PC-3 (cell line): ENCODE measurements at regions of chr3 and their contacts with region 1.

Region 1: GRCh38 chr3:20511863-20512505 is 326.0 kb upstream of the SGO1 start:
- DNase-seq: peak; percentile 76
- ATAC-seq: peak; percentile 98
- H3K4me3 ChIP-seq: no peak overlapping the region
- H3K27ac ChIP-seq: no peak overlapping the region
- H3K4me1 ChIP-seq: no peaks in the 10 kb centered on the region
- H3K27me3 ChIP-seq: no peaks in the 10 kb centered on the region
- CTCF ChIP-seq: peak; percentile 87

Region 2: GRCh38 chr3:20442846-20443245 is 69.1 kb before region 1 on chr3:
- CTCF ChIA-PET with region 1: no interaction called
- POLR2A ChIA-PET with region 1: no interaction called
- intact Hi-C with region 1: no loop called
- DNase-seq: no peak
- ATAC-seq: no peak
- H3K4me3 ChIP-seq: no peak overlapping the region
- H3K27ac ChIP-seq: no peak overlapping the region
- H3K4me1 ChIP-seq: no peaks in the 10 kb centered on the region
- H3K27me3 ChIP-seq: no peaks in the 10 kb centered on the region
- CTCF ChIP-seq: no peak

Region 3: DNA sequence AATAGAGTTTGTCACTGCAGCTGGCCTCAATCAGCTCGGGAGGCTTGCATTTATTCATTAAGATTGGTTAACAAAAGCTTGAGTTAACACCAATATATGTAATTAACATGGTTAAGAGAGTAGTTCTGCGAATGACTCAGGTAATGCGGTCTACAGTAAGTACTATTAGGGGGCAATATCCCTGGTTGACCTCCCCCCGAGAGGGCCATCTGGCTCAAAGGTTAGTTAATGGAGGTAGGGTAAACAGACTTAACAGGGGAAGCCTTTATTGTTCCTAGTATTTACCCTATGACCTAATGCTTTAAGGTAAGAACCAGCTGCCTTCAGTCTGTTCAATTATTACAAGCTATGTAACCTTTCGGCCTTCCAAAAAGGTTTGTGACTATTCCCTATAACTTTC is 77.3 kb after region 1 on chr3:
- CTCF ChIA-PET with region 1: no interaction called
- POLR2A ChIA-PET with region 1: no interaction called
- intact Hi-C with region 1: no loop called
- DNase-seq: no peak
- ATAC-seq: no peak
- H3K4me3 ChIP-seq: no peak overlapping the region
- H3K27ac ChIP-seq: no peak overlapping the region
- H3K4me1 ChIP-seq: no peaks in the 10 kb centered on the region
- H3K27me3 ChIP-seq: no peaks in the 10 kb centered on the region
- CTCF ChIP-seq: no peak

Region 4: DNA sequence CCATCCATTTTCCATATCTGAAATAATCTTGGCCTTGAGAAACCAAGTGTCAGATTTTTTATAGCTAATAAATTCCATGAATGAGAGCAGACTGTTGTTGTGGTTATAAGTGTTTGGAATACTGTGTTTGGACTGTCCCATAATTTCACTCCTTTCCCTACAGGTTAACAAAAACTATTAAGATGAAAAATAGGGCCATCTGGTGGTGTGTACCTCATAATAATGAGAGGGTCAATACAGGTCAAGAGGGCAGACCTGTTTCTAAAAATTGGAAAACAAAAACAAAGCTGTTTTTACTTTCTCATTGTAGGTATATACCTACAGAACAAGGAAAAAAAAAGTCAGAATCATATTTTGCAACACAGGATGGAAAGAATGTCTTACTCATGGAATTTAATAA is 227.8 kb after region 1 on chr3:
- CTCF ChIA-PET with region 1: no interaction called
- POLR2A ChIA-PET with region 1: no interaction called
- intact Hi-C with region 1: loop called (anchors 2 kb)
- DNase-seq: no peak
- ATAC-seq: no peak; the same call in 1 of the 2 replicates
- H3K4me3 ChIP-seq: no peak overlapping the region
- H3K27ac ChIP-seq: no peak overlapping the region
- H3K4me1 ChIP-seq: no peaks in the 10 kb centered on the region
- H3K27me3 ChIP-seq: no peaks in the 10 kb centered on the region
- CTCF ChIP-seq: 0 out of 2 replicates have a peak, but pooled peaks have one; percentile 18

Region 5: GRCh38 chr3:21290557-21290956 is 778.6 kb after region 1 on chr3:
- CTCF ChIA-PET with region 1: no interaction called
- POLR2A ChIA-PET with region 1: no interaction called
- intact Hi-C with region 1: loop called (anchors 10 kb)
- DNase-seq: peak; percentile 23
- ATAC-seq: no peak
- H3K4me3 ChIP-seq: no peak overlapping the region
- H3K27ac ChIP-seq: no peak overlapping the region
- H3K4me1 ChIP-seq: 0 out of 2 replicates have a peak, but pooled peaks cover 5% of the 10 kb centered on the region
- H3K27me3 ChIP-seq: no peaks in the 10 kb centered on the region
- CTCF ChIP-seq: peak; percentile 60

Region 6: DNA sequence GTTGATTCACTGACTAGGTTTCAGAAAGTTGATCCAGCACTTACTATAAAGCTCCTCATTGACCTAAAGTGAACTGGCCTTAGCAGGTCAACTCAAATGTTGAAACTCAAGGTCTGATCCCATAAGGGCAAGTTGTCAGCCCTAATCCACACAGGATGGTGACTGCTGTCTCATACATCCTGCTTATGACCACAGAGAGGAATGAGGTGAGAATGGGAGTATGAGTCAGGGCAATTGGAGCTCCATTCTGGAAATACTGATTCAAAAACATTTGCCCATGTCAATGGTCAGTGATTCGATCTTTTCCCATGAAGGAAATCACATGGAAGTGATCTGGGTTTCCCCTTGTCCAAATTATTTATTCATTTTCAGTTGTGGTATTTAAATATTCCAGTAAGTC is 1160.3 kb after region 1 on chr3:
- CTCF ChIA-PET with region 1: no interaction called
- POLR2A ChIA-PET with region 1: no interaction called
- intact Hi-C with region 1: loop called (anchors 5 kb)
- DNase-seq: peak; percentile 94
- ATAC-seq: peak; percentile 83
- H3K4me3 ChIP-seq: peak overlapping the region; percentile 29; the same call in 1 of the 2 replicates
- H3K27ac ChIP-seq: peak overlapping the region; percentile 98
- H3K4me1 ChIP-seq: peaks cover 59% of the 10 kb centered on the region
- H3K27me3 ChIP-seq: no peaks in the 10 kb centered on the region
- CTCF ChIP-seq: no peak